Dendritic cell treated with granulocyte-macrophage colony-stimulating factor and Interleukin-4, amounts not matched to agents 40 ng/mL and 50 ng/mL, for 4 days (primary cell): ENCODE measurements at regions of chr2 and their contacts with region 1.

Region 1: DNA sequence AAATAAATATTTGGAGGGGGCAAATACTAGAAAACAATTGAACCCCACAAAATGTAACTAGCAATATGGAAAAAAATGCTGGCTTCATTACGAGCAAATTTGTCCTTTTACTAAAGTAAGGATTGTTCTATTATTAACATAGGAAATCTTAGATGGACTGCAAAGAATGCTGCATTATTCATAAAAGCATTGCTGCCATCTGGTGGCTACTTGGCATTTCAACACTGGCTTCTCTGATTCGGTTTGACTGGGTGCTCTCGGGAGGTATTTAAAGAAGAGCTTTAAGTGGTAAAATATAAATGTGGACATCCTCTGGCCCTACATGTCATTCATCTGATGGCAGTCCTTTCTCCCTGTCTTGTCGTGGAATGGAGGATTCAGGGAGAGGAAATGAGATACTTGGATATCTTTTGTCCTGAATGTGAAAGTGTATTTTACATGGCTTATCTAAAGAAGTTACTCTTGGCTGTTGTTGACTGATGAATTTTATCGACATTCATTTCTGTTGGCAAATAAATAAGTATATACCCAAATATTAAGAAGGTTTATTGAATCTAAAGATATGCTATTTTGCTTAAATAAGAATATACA is 130.2 kb downstream of the ARHGAP15 start:
- H3K4me3 Mint-ChIP-seq: no peak overlapping the region
- H3K27ac Mint-ChIP-seq: no peak overlapping the region
- H3K4me1 Mint-ChIP-seq: peaks cover 34% of the 10 kb centered on the region
- H3K27me3 Mint-ChIP-seq: no peaks in the 10 kb centered on the region

Region 2: DNA sequence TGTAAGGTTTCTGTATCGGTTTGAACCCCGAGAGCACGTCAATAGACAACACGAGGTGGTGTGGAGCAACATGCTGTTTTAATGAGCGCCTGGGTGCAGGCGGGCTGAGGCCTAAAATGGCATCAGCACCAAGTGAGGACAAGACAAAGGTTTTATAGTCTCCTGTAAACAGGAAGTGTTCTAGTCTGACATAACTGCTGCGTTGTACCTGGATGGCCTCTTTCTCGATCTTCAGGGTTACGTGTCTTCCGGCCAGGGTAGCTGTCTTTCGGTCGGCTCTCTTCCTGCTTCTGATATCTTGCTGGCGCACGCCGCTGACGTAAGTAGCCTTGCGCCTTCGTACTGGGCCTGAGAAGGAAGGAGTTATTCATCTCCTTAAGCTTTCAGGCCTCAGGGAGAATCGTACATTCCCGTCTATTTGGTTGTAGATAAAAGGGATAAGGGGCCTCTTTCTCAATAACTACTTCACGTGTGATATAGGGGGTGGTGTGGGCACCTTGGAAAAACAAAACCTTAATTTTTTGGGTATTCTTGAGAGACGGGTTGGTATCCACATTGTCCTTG is 328.5 kb before region 1 on chr2:
- intact Hi-C with region 1: no loop called
- H3K4me3 Mint-ChIP-seq: no peak overlapping the region
- H3K27ac Mint-ChIP-seq: no peak overlapping the region
- H3K4me1 Mint-ChIP-seq: peaks cover 4% of the 10 kb centered on the region
- H3K27me3 Mint-ChIP-seq: no peaks in the 10 kb centered on the region

Region 3: GRCh38 chr2:143034292-143035074 is 225.0 kb before region 1 on chr2:
- intact Hi-C with region 1: loop called (anchors 2 kb)
- H3K4me3 Mint-ChIP-seq: no peak overlapping the region
- H3K27ac Mint-ChIP-seq: no peak overlapping the region
- H3K4me1 Mint-ChIP-seq: peaks cover 9% of the 10 kb centered on the region
- H3K27me3 Mint-ChIP-seq: no peaks in the 10 kb centered on the region

Region 4: DNA sequence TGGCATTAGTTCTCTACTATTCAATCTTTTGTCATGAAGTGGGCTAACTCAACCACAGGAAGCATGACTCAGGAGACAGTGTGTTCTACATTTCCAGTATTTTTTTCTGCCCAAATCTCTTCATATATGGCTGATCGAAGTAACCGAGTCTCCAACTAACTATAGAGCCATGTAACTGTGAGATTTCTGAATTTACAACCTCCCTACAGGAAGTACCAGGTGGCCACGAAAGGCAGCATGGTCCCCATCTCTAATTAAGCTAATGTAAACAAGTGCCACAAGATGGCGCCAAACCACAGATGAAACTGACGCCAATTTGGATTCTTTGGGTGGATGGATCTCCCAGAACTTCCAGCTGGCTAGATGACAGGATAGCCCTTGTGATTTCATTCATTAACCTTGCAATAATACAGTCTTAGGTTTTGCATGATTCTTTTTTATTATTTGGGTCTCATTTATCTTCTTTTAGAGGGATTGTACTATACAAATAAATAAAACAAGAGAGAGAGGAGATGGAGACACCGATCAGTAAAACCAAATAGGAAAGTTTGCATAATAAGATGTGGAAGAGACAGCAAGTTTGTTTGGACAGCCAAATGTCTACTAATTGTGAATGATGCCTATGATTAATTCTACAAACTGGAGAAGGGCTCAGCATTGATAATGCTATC is 148.6 kb before region 1 on chr2:
- intact Hi-C with region 1: loop called (anchors 2 kb)
- H3K4me3 Mint-ChIP-seq: no peak overlapping the region
- H3K27ac Mint-ChIP-seq: no peak overlapping the region
- H3K4me1 Mint-ChIP-seq: peaks cover 5% of the 10 kb centered on the region
- H3K27me3 Mint-ChIP-seq: no peaks in the 10 kb centered on the region

Region 5: DNA sequence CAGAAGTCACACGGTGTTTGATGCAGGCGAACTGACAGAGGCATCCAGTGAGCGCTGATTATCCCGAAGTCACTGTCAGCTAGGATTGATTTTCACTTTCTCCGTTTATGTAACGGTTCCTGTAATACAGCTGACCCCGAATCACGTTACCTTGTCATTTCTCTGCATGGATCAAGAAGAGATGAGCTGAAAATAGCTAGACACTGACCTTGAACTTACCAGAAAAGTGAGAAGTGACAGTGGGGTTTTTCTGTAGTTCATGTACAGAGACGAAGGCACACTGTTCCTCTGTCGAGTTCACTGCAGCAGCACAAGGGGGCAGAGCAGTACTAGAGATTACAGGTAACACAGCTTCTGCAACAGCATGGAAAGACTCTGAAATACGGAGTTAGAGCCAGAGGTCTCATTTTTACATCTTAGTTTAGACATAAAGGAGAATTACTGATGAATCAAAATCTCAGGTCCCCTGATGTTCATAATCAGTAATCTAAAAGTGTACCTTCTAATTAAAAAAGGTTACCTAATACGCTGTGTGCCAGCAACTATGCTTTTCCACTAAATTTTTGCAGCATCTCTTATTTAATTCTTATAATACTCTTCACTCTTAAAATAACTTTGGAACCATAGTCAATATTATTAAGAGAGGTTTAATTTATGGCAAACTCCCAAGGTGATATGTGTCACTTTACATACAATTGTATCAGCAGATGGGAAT is 97.2 kb before region 1 on chr2:
- intact Hi-C with region 1: loop called (anchors 5 kb)
- H3K4me3 Mint-ChIP-seq: no peak overlapping the region
- H3K27ac Mint-ChIP-seq: no peak overlapping the region
- H3K4me1 Mint-ChIP-seq: peaks cover 37% of the 10 kb centered on the region
- H3K27me3 Mint-ChIP-seq: no peaks in the 10 kb centered on the region

Region 6: GRCh38 chr2:143223556-143223955 is 35.9 kb before region 1 on chr2:
- intact Hi-C with region 1: loop called (anchors 5 kb)
- H3K4me3 Mint-ChIP-seq: no peak overlapping the region
- H3K27ac Mint-ChIP-seq: no peak overlapping the region
- H3K4me1 Mint-ChIP-seq: no peaks in the 10 kb centered on the region
- H3K27me3 Mint-ChIP-seq: no peaks in the 10 kb centered on the region